GM10248 (cell line): ENCODE measurements at regions of chr15 and their contacts with region 1.

Region 1: GRCh38 chr15:38690689-38691332 is 126.2 kb upstream of the RASGRP1 start:
- DNase-seq: peak; percentile 49
- CTCF ChIP-seq: peak; percentile 77

Region 2: GRCh38 chr15:38068626-38069391 is 622.0 kb before region 1 on chr15:
- CTCF ChIA-PET with region 1: no interaction called
- POLR2A ChIA-PET with region 1: no interaction called
- DNase-seq: peak; percentile 50
- CTCF ChIP-seq: no peak

Region 3: GRCh38 chr15:38440353-38441129 is 250.3 kb before region 1 on chr15:
- CTCF ChIA-PET with region 1: interaction called, 156 read pairs
- POLR2A ChIA-PET with region 1: no interaction called
- DNase-seq: peak; percentile 55
- CTCF ChIP-seq: peak; percentile 92

Region 4: DNA sequence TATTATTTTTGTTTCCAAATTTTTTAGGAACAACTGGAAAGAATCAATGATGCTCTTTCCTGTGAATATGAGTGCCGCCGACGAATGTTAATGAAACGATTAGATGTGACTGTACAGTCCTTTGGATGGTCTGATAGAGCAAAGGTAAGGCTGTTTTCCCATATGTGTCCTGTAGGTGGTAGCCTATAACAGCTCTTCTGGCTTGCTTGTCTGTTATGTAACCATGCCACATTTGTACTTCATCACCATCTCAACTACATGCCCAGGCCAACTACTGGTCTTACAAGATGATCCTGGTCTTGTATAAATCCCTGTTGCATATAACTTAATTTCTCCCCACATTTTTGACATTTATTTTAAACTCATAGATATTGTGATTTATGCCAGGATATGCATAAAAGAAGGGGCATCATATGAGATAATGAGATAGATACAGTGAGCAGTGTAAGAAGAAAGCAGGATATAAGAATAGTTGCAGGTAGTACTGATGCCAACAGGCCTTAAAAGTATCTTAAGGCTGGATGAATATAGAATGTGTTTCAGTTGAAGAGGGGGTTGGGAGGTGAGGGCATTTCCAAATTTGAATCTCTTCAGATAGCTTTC is 216.6 kb before region 1 on chr15:
- CTCF ChIA-PET with region 1: interaction called, 129 read pairs
- POLR2A ChIA-PET with region 1: no interaction called
- DNase-seq: peak; percentile 49
- CTCF ChIP-seq: peak; percentile 54

Region 5: GRCh38 chr15:38531509-38531908 is 159.3 kb before region 1 on chr15:
- CTCF ChIA-PET with region 1: interaction called, 13 read pairs
- POLR2A ChIA-PET with region 1: no interaction called
- DNase-seq: no peak
- CTCF ChIP-seq: no peak

Region 6: DNA sequence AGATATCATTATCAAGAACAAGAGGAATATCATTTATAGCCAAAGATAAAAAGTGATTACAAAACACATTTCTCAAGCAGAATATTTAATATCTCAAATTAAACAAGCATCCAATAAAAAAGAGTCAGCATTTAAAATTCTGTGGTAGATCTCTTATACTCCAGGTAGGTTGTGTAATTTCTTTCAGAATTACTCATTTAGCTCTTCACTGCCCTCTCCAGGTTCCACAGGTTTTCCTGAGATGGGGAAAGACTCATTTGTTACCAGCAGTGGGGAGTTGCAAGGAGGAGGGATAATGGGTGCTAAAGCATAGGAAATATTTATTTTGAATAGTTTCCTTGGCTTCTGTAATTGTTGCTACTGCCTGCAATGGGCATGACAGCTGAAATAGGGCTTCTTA is 43.1 kb before region 1 on chr15:
- CTCF ChIA-PET with region 1: interaction called, 17 read pairs
- POLR2A ChIA-PET with region 1: no interaction called
- DNase-seq: no peak
- CTCF ChIP-seq: no peak

Region 7: DNA sequence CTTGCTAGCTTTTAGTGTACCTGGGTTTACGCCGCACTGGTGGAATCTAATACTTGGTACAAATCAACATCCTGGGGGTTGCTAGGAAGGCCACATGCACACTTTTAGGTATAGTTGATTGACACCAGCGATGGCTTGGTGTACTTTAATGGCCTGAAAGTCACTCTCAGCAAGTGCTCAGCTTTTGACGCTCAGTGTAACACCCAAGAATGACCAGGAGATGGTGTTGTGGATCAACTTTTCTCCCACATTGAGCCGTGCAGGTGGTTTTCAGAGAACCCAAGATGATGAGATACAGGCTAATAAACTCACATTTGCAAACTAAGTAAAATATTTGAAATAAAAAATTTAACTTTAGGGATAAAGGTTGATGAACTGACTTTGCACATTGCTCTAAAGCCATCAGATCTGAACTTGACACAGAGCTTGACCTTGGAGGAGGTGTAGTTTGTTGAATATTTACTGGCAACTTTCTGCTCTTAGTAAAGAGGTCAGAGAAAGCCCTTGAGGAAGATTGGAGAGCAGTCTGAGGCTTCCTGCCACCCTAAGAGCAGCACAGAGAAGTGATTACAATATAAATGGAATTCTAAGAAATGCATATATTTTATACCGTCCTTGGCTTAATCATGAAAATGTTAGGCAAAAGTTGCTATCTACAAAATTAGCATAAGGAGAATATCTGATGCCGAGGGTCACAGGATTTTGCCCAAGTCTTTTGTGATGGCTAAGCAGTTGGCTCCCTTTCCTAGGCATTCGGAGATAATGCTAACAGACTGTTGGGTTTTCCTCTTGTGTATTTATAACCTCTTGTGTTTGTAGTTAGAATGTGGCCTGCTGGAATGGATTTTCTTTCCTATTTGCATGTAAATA is 17.2 kb after region 1 on chr15:
- CTCF ChIA-PET with region 1: interaction called, 195 read pairs
- POLR2A ChIA-PET with region 1: no interaction called
- DNase-seq: peak; percentile 52
- CTCF ChIP-seq: peak; percentile 61

Region 8: GRCh38 chr15:38809621-38810020 is 118.8 kb after region 1 on chr15:
- CTCF ChIA-PET with region 1: no interaction called
- POLR2A ChIA-PET with region 1: no interaction called
- DNase-seq: no peak
- CTCF ChIP-seq: no peak

Region 9: GRCh38 chr15:39195988-39196486 is 505.2 kb after region 1 on chr15:
- CTCF ChIA-PET with region 1: no interaction called
- POLR2A ChIA-PET with region 1: no interaction called
- DNase-seq: peak; percentile 19
- CTCF ChIP-seq: no peak

Region 10: DNA sequence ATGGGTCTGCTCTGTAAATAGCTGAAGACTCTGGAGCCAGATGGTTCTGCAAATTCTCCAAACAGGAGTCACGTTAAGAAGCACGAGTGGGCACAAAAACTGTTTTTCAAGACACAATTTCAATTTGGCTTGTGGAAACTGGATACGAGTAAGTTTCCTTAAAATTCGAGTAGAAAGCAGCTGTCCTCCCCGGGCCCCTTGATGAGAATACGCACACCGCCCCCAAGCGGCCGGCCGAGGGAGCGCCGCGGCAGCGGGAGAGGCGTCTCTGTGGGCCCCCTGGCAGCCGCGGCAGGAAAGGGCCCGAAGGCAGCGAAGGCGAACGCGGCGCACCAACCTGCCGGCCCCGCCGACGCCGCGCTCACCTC is 889.3 kb after region 1 on chr15:
- CTCF ChIA-PET with region 1: no interaction called
- POLR2A ChIA-PET with region 1: no interaction called
- DNase-seq: peak; percentile 87
- CTCF ChIP-seq: peak; percentile 96